ENCODE measurements at regions of chr7 and their contacts with region 1.

Region 1: DNA sequence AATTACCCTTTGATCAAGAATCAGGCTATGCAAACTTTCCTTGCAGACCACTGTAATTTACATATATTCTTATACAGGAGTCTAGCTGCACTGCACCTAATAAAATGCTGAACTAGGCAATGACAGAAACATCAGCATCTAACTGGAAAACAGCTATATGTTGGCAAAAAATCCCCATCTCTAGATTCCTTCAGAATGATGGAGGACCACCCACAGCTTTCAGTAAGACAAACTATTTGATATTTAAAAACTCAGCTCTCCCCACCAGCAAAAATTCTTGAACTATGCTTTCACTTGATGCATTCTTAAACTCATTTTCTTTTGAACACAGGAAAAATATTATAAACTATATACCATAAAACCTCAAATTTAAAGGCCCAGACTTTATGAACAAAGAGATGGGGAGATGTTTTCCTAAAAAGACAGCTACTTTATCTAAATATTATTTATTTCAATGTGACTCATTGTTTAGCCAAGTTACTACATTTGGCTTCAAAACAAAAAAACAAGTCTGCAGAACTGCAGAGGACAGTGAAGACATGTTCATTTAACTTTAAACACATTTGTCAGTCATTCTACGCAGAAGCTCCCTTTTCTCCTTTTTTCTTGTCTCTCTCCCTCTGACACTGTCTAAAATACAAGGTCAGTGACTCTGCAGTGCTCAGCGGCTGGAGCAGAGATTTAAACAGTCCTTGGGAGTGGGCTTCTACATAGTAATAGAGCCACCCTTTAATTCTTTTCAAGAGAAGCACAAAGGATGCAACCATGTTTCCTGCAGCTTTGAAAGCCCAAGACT is 77.2 kb downstream of the SEMA3C start:
- DNase-seq: no peak
- ATAC-seq: 0 out of 2 replicates have a peak, but pooled peaks have one; percentile 19
- H3K4me3 ChIP-seq: no peak overlapping the region
- H3K27ac ChIP-seq: peak overlapping the region; percentile 73
- H3K4me1 ChIP-seq: peaks cover 92% of the 10 kb centered on the region
- H3K27me3 ChIP-seq: no peaks in the 10 kb centered on the region
- CTCF ChIP-seq: no peak

Region 2: DNA sequence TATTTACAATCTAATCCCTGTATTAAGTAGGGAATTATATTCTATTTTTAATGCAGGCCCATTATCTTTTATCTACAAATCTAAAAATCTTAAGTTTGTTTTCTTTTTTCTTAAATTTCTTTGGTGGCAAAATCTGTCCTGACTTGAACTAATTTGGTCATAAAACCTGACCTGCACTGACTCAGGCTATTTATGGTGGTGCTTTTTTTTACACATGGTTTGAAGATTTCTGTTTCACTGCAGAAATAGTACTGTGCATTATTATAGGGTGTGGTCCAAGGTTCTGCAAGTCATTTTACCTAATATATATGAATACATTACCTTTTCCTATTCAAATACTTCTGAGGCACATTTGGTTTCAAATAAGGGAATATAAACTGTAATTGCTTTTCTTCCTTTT is 66.1 kb before region 1 on chr7:
- CTCF ChIA-PET with region 1: no interaction called
- POLR2A ChIA-PET with region 1: no interaction called
- in situ Hi-C with region 1: no loop called
- intact Hi-C with region 1: loop called (anchors 1 kb)
- DNase-seq: no peak
- ATAC-seq: no peak
- H3K4me3 ChIP-seq: no peak overlapping the region
- H3K27ac ChIP-seq: peak overlapping the region; percentile 74; the same call in 1 of the 2 replicates
- H3K4me1 ChIP-seq: peaks cover 41% of the 10 kb centered on the region
- H3K27me3 ChIP-seq: no peaks in the 10 kb centered on the region
- CTCF ChIP-seq: no peak

Region 3: GRCh38 chr7:80997841-80998240 is 156.2 kb after region 1 on chr7:
- CTCF ChIA-PET with region 1: no interaction called
- POLR2A ChIA-PET with region 1: no interaction called
- in situ Hi-C with region 1: no loop called
- intact Hi-C with region 1: no loop called
- DNase-seq: no peak
- ATAC-seq: no peak
- H3K4me3 ChIP-seq: no peak overlapping the region
- H3K27ac ChIP-seq: peak overlapping the region; percentile 48; the same call in 1 of the 2 replicates
- H3K4me1 ChIP-seq: no peaks in the 10 kb centered on the region
- H3K27me3 ChIP-seq: no peaks in the 10 kb centered on the region
- CTCF ChIP-seq: no peak

Measured in Panc1 (cell line).